Activated naive CD4-positive, alpha-beta T cell treated with anti-CD3 and anti-CD28 coated beads for 36 hours (primary cell): ENCODE measurements at regions of chr10 and their contacts with region 1.

Region 1: DNA sequence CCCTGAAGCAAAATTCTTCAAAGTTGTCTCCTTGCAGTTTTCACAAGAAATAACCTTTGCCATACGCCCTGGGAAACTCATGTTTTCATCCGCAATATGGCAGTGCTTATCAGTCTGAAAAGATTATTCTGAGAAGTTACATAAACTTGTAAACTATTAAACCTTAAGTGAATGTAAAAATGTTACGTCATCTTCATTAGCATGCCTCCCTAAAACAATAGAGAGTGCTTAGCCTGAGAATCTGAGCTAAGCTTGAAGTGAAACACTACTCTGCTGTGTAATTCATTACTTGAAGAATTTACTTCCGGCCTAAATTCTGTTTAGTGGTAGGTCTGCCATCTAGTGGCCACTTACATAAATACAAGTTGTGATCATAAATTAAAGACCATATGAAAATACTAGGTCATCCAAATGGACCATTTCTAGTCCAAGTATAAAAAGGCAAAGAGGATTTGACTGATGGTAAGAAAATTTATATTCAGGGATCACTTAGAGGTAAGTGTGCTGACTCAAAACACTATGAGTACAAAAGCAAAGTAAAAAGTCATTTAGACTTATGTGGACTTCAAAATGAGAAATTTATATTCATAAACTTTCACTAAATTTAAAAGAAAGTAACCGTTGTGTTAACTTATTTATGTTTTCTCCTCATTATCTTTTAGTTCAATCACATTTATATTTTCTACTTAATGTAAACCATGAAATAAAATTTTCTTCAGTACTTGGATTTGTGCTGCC is 745.1 kb upstream of the LRRTM3 start:
- DNase-seq: peak; percentile 21
- H3K4me3 Mint-ChIP-seq: no peak overlapping the region
- H3K27ac Mint-ChIP-seq: no peak overlapping the region
- H3K4me1 Mint-ChIP-seq: no peaks in the 10 kb centered on the region
- H3K27me3 Mint-ChIP-seq: no peaks in the 10 kb centered on the region

Region 2: DNA sequence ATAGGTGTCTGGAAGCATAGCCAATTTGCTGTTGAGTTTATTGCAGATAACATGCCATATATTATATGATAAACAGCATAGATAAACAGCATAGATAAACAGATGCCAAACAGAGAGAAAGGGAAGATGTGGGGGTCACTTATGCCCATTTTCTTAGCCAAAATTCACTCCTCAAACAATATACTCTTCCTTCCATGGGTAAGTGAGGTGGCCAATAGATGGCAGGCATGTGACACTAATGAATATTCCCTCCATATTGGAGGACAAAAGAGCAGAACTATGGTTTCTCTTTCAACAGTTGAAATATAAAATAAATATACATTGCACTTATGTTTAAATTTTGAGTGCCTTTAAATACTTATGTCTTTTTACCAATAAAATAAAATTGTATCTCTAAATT is 1446.8 kb before region 1 on chr10:
- CTCF ChIA-PET with region 1: no interaction called
- intact Hi-C with region 1: loop called (anchors 10 kb)
- DNase-seq: no peak
- H3K4me3 Mint-ChIP-seq: no peak overlapping the region
- H3K27ac Mint-ChIP-seq: no peak overlapping the region
- H3K4me1 Mint-ChIP-seq: no peaks in the 10 kb centered on the region
- H3K27me3 Mint-ChIP-seq: no peaks in the 10 kb centered on the region

Region 3: GRCh38 chr10:66931340-66931948 is 750.7 kb after region 1 on chr10:
- CTCF ChIA-PET with region 1: interaction called, 3 read pairs
- intact Hi-C with region 1: loop called (anchors 1 kb)
- DNase-seq: peak; percentile 6
- H3K4me3 Mint-ChIP-seq: no peak overlapping the region
- H3K27ac Mint-ChIP-seq: no peak overlapping the region
- H3K4me1 Mint-ChIP-seq: peaks cover 1% of the 10 kb centered on the region
- H3K27me3 Mint-ChIP-seq: peaks cover 38% of the 10 kb centered on the region

Region 4: GRCh38 chr10:67520924-67521520 is 1340.3 kb after region 1 on chr10:
- CTCF ChIA-PET with region 1: no interaction called
- intact Hi-C with region 1: loop called (anchors 1 kb)
- DNase-seq: peak; percentile 54
- H3K4me3 Mint-ChIP-seq: no peak overlapping the region
- H3K27ac Mint-ChIP-seq: no peak overlapping the region
- H3K4me1 Mint-ChIP-seq: peaks cover 1% of the 10 kb centered on the region
- H3K27me3 Mint-ChIP-seq: no peaks in the 10 kb centered on the region